ENCODE measurements at regions of chr11 and their contacts with region 1.

Region 1: DNA sequence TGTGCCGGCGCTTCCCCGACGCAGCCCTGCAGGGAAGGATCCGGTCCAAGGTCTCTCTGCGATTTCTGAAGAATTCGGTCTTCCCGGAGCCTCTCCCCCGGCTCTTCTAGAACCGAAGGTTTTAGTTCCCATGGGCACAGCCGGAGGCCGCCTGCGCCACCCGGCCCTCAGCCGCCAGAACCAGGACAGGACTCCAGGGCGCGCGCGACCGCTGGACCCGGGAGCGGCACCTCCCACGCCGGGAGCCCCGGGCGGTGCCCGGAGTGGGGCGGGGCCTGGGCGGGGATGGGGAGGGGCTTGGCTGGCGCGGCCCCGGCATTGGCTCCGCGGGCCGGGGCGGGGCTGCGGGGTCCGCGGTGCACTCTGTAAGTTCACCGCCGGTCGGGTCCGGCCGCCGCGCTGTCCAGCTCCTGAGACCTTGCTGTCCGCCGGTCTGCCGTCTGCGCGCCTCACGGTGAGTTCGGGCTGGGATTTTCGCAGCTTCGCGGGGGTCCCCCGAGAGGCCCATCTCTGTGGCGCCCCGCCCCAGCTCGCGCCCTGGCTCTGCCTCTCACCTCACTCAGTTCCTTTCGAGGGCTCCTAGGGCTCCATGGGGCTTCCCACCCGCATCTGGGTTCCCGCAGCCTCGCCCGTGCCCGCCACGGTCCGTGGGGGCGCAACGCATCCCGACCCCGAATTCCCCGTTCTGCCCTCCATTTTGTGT is at the start of gene CDC42EP2:
- DNase-seq: peak; percentile 90
- H3K27ac ChIP-seq: peak within 1 kb of the TSS; percentile 97
- CTCF ChIP-seq: no peak

Region 2: GRCh38 chr11:65225279-65226102 is 89.2 kb before region 1 on chr11:
- CTCF ChIA-PET with region 1: interaction called, 16 read pairs
- POLR2A ChIA-PET with region 1: no interaction called
- DNase-seq: peak; percentile 77
- H3K27ac ChIP-seq: peak overlapping the region; percentile 90
- CTCF ChIP-seq: peak; percentile 75

Region 3: DNA sequence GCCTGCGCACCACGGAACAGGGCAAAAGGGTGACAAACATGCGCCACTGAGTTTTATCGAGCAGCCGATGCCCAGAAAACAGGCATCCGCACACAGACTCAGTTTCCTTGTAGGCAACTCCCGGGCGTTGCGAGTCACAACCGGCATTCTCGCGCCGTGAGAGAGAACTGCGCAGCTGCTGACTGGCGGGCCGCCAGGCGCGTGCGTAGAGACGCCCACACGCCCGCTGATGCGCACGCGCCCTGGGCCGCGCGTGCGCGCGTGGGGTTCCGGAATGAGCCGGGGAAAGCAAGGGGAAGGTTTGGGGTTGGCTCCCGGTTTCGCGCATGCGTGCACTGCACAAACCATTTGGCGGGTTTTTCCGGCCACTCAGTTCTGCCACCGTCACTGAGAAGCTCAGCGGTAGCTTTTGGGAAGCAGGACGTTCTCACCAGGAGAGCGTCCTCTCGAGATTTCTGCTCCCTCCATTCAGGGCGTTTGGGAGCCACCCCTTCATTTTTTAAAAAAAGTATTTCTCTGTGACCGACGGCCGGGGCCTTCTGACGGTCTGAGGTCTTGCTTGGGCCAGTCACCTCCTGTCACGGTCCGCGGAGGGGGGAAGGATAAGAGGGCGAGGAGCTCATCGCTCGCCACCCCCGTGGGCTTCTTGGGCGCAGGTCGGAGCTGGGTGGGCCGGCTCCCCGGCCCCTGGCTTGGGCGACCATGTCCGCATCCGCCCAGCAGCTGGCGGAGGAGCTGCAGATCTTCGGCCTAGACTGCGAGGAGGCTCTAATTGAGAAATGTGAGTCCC is 52.9 kb before region 1 on chr11 and contains the start of gene POLA2:
- CTCF ChIA-PET with region 1: interaction called, 12 read pairs
- POLR2A ChIA-PET with region 1: interaction called, 3 read pairs
- DNase-seq: peak; percentile 99
- H3K27ac ChIP-seq: peak within 1 kb of the TSS; percentile 94
- CTCF ChIP-seq: no peak

Region 4: DNA sequence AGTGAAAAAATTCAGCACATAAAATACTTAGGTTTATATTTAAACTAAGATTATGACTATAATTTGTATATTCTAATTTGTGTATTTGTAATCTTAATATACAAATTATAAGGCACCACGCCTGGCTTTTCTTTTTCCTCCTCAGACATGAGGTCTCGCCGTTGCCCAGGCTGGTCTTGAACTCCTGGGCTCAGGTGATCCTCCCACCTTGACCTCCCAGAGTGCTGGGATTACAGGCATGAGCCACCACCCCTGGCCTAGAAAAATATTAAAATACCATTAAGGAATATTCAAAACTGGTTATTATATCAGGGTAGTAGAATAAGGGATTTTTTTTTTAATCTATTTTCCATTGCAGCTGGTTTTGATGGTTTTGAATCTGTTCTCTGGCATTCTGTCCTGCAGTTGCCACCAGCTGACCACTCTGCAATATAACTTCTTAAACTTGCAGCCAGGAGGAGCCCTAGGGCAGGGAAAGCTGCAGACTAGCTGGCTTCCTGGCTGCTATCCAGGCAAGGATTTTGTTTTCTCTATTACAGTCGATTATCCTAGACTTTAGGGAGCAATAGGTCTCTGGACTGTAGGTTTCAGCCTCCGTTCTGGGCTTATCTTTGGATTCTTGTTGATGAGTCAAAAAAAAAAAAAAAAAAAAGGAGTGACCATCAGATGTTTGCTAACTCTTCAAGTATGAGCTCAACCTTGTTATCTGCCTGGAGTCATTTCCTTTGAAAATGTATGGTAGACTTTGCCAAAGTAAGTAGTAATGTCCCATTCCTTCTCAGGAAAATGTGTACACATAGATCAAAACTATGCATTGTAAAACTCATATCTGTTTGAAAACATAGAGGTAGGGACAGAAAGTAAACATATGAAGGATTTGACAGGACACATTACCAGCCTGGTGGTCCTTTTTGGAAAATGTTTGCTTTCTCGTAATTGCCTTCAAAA is 39.6 kb before region 1 on chr11:
- CTCF ChIA-PET with region 1: interaction called, 41 read pairs
- POLR2A ChIA-PET with region 1: no interaction called
- DNase-seq: peak; percentile 67
- H3K27ac ChIP-seq: peak overlapping the region; percentile 60
- CTCF ChIP-seq: peak; percentile 77

Region 5: GRCh38 chr11:65290448-65291165 is 24.0 kb before region 1 on chr11:
- CTCF ChIA-PET with region 1: interaction called, 19 read pairs
- POLR2A ChIA-PET with region 1: no interaction called
- DNase-seq: no peak
- H3K27ac ChIP-seq: peak overlapping the region; percentile 79
- CTCF ChIP-seq: no peak

Region 6: GRCh38 chr11:65329944-65330403 is 15.3 kb after region 1 on chr11:
- CTCF ChIA-PET with region 1: interaction called, 83 read pairs
- POLR2A ChIA-PET with region 1: no interaction called
- DNase-seq: peak; percentile 61
- H3K27ac ChIP-seq: peak overlapping the region; percentile 49
- CTCF ChIP-seq: peak; percentile 79

Region 7: DNA sequence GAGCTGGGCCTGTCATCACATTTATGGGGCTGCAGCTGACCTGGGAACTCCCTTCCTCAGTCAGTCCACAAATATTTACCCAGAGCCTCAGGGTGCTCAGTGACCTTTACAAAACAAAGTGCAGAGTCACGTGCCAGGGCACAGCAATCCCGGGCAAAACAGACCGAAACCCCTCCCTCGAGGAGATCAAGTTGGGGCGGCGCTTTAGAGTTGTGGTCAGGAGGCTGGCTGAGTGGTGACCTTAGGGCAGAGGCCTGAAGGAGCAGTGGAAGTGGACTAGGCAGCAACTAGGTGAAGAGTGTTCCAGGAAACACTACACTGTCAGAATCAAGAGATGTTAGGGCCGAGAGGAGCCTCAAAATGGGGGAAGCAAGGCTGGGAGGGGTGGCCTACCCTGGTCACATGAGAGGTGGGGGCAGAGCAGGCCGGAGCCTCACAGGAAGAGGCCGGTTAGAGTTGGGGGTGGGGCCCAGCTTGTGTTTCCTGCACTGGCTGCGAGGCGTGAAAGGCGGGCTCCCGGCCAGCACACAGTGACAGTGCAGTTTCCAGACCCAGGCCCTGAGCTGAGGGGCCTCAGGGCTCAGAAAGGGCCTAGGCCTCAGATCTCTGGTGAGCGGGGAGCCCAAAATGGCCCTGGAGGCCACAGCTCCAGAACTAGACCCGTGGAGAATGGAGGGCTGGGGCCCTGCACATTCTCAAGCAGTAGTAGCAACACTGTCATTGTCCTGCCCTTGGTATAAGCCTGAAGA is 104.2 kb after region 1 on chr11:
- CTCF ChIA-PET with region 1: no interaction called
- POLR2A ChIA-PET with region 1: no interaction called
- DNase-seq: peak; percentile 90
- H3K27ac ChIP-seq: peak overlapping the region; percentile 100
- CTCF ChIP-seq: no peak